Activated T-helper 2 cell treated with anti-CD3 and anti-CD28 coated beads, Interferon-gamma antibody, Interleukin-2, Interleukin-4, amounts not matched to agents 10 μg/mL and 5 μg/mL and 100 μg/mL, durations not matched to agents 14 hours and 24 hours and 36 hours (primary cell): ENCODE measurements at regions of chr20 and their contacts with region 1.

Region 1: DNA sequence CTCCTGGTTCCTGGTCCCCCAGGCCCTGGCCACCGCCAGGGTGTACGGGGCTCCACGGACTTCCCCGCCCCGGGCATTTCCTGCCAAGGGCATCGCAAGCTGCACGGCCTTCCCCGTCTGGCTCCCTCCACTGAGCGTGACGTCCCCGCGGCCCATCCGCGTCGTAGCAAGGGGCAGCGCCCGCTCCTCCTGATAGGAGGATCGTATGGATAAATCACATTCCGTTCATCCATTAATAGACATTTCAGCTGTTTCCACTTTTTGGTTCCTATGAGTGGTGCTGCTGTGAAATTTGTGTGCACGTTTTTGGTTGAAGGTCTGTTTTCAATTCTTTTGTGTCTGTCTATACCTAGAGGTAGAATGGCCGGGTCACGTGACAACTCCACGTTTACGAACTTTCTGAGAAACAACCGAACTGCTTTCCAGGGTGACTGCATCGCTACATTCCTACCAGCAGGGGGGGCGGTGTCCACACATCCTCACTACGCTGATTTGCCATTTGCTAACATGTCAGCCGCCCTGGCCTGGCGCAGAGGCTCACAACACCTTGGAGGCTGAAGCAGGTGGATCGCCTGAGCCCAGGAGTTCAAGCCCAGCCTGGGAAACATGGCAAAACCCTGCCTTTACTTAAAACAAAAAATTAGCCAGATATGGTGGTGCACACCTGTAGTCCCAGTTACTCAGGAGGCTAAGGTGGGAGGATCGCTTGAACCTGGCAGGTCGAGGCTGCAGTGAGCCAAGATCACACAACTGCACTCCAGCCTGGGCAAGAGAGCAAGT is 37.7 kb downstream of the KCNQ2 start:
- DNase-seq: peak; percentile 70
- H3K4me3 Mint-ChIP-seq: no peak overlapping the region
- H3K27ac Mint-ChIP-seq: no peak overlapping the region
- H3K4me1 Mint-ChIP-seq: peaks cover 5% of the 10 kb centered on the region
- H3K27me3 Mint-ChIP-seq: peaks cover 8% of the 10 kb centered on the region

Region 2: DNA sequence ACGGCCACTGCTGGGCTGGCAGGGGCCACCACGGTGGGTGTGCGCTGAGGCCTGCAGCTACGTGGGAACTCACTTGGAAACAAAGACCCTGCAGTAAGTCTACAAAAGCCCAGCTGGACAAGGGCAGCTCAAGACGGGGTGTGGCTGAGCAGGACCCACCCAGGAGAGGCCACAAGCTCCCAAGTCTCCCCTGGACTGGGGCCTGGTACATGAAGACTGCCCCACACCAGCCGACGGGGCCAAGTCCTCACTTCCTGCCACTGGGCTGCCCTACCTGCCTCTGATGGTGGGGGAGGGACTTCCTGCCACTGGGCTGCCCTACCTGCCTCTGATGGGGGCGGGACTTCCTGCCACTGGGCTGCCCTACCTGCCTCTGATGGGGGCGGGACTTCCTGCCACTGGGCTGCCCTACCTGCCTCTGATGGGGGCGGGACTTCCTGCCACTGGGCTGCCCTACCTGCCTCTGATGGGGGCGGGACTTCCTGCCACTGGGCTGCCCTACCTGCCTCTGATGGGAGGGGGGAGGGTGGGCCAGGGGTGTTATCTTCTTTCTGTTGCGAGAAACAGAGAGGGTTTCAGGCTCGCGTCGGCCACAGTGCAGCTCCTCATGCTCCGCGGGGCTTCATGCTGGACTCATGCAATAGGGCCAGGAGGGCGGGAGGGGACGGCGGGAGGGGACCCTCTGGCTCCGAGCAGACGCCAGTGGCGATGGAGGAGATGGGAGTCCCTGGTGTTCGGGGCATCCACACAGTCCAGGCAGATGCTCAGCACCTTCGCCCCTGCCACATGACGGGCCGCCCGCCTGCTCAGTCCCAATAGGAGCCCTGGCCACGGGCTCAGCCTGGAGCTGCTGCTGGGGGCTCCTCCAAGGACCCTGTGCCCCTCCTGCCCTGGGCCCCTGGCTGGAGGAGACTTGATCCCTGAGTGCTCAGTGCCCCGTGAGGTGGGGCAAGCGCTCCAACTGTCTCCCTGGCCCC is 25.0 kb before region 1 on chr20:
- intact Hi-C with region 1: no loop called
- DNase-seq: no peak
- H3K4me3 Mint-ChIP-seq: no peak overlapping the region
- H3K27ac Mint-ChIP-seq: no peak overlapping the region
- H3K4me1 Mint-ChIP-seq: no peaks in the 10 kb centered on the region
- H3K27me3 Mint-ChIP-seq: no peaks in the 10 kb centered on the region

Region 3: GRCh38 chr20:63452821-63453523 is 18.2 kb after region 1 on chr20:
- intact Hi-C with region 1: no loop called
- DNase-seq: no peak
- H3K4me3 Mint-ChIP-seq: no peak overlapping the region
- H3K27ac Mint-ChIP-seq: no peak overlapping the region
- H3K4me1 Mint-ChIP-seq: no peaks in the 10 kb centered on the region
- H3K27me3 Mint-ChIP-seq: peaks cover 3% of the 10 kb centered on the region

Region 4: GRCh38 chr20:63495741-63496595 is 61.2 kb after region 1 on chr20:
- intact Hi-C with region 1: loop called (anchors 2 kb)
- DNase-seq: peak; percentile 49
- H3K4me3 Mint-ChIP-seq: peak overlapping the region; percentile 37
- H3K27ac Mint-ChIP-seq: no peak overlapping the region
- H3K4me1 Mint-ChIP-seq: peaks cover 2% of the 10 kb centered on the region
- H3K27me3 Mint-ChIP-seq: peaks cover 17% of the 10 kb centered on the region